Activated naive CD8-positive, alpha-beta T cell treated with anti-CD3 and anti-CD28 coated beads, Interleukin-2, amount 10 ng/mL, durations not matched to agents 7 days and 5 days (primary cell): ENCODE measurements at regions of chr12 and their contacts with region 1.

Region 1: DNA sequence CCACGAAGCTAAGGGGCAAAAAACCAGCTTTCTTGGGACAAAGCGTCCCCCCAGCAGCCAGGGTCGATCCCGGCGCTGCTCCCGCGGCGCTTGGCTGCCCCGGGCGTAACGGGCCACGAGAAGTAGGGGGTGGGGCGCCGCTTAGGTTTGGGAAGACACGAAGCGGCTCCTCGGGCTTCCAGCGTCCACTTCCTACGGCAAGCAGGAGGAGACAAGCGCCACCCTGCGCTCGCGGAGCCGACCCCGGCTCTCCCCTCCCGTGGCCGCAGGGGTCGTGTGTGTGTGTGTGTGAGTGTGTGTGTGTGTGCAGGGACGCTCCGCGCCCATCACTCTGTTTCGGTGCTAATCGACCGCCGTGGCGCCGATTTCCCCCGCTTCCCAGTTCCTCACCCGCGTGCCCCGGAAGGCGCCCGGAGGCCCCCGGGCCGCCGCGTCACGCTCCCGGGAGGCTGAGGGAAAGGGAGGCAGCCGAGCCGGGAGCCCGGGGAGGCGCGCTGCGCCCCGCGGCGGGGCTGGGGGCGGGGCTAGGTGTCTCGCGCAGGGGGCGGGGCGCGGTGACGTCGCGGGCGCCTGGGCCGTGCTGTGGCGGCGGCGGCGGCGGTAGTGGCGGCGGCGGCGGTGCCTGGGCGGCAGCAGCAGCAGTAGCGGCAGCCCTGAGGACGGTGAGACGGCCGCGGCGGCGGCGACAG is at the start of gene ERC1:
- DNase-seq: peak; percentile 90
- ATAC-seq: peak; percentile 77
- H3K4me3 Mint-ChIP-seq: peak within 1 kb of the TSS; percentile 92
- H3K27ac Mint-ChIP-seq: peak within 1 kb of the TSS; percentile 91
- H3K4me1 Mint-ChIP-seq: peaks cover 34% of the 10 kb centered on the region
- H3K27me3 Mint-ChIP-seq: peaks cover 3% of the 10 kb centered on the region
- total RNA-seq, gene ERC1: 24.0 to 30.3 TPM

Region 2: DNA sequence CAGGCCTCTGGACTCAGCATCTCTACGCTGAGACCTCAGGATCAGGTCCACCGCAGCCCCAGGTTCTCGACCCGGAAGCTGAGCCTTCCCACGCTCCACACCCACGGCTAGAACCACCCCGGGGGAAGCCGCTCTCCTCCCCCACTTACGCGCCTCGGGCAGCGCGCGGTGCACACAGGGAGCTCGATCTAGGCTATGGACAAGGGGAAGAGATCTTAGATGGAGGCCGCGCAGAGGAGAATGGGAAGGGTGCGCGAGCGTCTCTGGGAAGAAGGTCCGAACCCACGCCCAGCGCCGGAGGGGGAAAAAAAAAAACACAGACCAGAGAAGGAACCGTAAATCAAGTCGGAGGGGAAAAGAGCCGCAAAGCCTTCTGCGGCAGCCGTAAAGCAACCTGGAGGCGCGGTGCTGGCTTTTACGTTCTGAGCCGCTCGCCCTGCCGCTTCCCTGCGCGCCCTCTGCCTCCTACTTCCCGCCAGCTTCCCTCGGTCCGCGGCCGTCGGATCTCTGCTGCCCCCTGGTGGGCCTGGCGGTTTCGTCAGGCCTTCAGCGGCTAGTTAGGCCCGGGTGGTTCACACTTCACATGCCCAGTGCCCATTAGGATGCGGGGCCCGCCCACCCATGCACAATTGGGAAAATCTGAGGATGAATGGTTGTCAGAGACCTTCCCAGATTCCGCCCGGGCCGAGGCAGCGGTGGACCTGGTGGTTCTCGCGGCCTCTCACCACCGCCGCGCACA is 41.2 kb before region 1 on chr12 and contains the start of gene RAD52:
- POLR2A ChIA-PET with region 1: interaction called, 11 read pairs
- DNase-seq: peak; percentile 97
- ATAC-seq: peak; percentile 91
- H3K4me3 Mint-ChIP-seq: peak within 1 kb of the TSS; percentile 91
- H3K27ac Mint-ChIP-seq: peak within 1 kb of the TSS; percentile 80
- H3K4me1 Mint-ChIP-seq: peaks cover 16% of the 10 kb centered on the region
- H3K27me3 Mint-ChIP-seq: peaks cover 4% of the 10 kb centered on the region
- total RNA-seq, gene RAD52: 15.9 to 17.9 TPM

Region 3: GRCh38 chr12:1013618-1014489 is 23.0 kb after region 1 on chr12:
- POLR2A ChIA-PET with region 1: no interaction called
- DNase-seq: no peak
- ATAC-seq: no peak
- H3K4me3 Mint-ChIP-seq: no peak overlapping the region
- H3K27ac Mint-ChIP-seq: no peak overlapping the region
- H3K4me1 Mint-ChIP-seq: no peaks in the 10 kb centered on the region
- H3K27me3 Mint-ChIP-seq: no peaks in the 10 kb centered on the region

Region 4: GRCh38 chr12:1073652-1074051 is 82.8 kb after region 1 on chr12:
- POLR2A ChIA-PET with region 1: no interaction called
- DNase-seq: no peak
- ATAC-seq: no peak
- H3K4me3 Mint-ChIP-seq: no peak overlapping the region
- H3K27ac Mint-ChIP-seq: no peak overlapping the region
- H3K4me1 Mint-ChIP-seq: no peaks in the 10 kb centered on the region
- H3K27me3 Mint-ChIP-seq: no peaks in the 10 kb centered on the region